Left ventricle myocardium superior (tissue), 1 donor: ENCODE measurements at regions of chr17 and their contacts with region 1.

Region 1: GRCh38 chr17:32783602-32784001 is 93.3 kb downstream of the MYO1D start:
- DNase-seq: no peak
- ATAC-seq: peak; percentile 41

Region 2: DNA sequence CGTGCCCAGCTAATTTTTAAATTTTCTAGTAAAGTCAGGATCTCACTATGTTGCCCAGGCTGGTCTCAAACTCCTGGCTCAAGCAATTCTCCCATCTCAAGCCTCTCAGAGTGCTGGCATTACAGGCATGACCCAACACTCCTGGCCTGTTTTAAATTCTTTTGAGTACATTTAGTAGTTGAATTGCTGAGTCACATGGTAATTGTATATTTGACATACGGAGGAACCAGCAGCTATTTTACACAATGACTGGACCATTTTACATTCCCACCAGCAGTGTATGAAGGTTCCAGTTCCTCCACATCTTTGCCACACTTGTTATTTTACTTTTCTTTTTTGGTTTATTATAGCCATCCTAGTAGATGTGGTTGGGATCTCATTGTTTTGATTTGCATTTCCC is 597.7 kb before region 1 on chr17:
- intact Hi-C with region 1: no loop called
- DNase-seq: no peak
- ATAC-seq: no peak

Region 3: DNA sequence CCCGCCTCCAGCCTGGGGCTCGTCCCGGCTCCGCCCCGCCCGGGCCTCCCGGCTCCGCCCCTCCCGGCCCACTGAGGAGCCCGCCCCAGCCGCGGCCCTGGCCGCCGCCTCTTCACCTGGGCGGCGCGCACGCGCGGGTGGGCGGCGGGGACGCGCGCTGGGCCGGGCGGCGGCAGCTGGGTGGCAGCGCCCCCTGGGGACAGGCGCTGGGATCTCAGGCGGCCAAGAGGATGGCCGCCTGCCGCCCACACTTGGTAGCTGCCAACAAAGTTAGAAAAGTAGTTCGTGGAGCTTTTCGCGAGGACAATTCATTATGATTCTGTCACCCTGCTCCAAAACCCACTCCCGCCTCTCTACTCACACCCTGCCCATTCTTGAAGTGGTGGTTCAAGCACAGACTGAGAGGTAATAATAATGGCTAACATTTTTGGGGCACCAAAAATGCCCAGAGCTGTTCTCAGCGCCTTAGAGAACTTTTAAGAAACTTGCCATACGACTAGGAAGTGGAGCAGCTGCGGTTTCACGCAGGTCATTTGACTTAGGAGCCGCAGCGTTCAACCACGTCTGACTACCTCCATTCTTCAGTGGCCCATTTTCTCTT is 93.7 kb after region 1 on chr17:
- intact Hi-C with region 1: loop called (anchors 10 kb)
- DNase-seq: peak; percentile 97
- ATAC-seq: peak; percentile 99

Region 4: GRCh38 chr17:32909787-32910369 is 126.3 kb after region 1 on chr17:
- intact Hi-C with region 1: loop called (anchors 10 kb)
- DNase-seq: no peak
- ATAC-seq: peak; percentile 83